ENCODE measurements at regions of chr2 and their contacts with region 1.

Region 1: GRCh38 chr2:62774555-62775366 is 69.2 kb downstream of the EHBP1 start:
- ATAC-seq: peak in 4 of 8 experiments; percentile 39 to 72 (median 48)
- H3K4me3 ChIP-seq: no peak overlapping the region
- H3K27ac ChIP-seq: no peak overlapping the region
- H3K4me1 ChIP-seq: no peaks in the 10 kb centered on the region

Region 2: DNA sequence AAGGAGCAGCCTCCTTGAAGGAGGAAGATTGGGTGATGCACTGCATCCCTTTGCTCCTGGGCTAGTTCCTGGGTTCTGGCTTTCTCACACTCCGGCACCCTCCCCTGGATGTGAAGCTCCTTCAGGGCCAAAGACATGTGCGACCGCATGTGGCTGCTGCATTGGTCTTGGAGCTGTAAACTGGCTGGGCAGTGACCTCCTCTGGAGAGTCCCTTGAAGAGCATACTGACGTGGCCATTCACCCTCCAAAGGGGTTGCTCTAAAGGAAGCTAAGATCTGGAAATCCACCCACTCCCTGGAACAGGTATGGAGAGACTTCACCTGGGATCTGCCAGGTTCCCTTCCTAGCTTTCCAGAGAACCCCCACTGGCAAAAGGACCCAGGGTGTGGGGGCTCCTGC is 330.9 kb before region 1 on chr2:
- in situ Hi-C with region 1: loop called in 1 of 9 experiments (anchors 10 kb)
- ATAC-seq: peak in 2 of 8 experiments; percentile 24 to 66
- H3K4me3 ChIP-seq: no peak overlapping the region
- H3K27ac ChIP-seq: no peak overlapping the region
- H3K4me1 ChIP-seq: no peaks in the 10 kb centered on the region

Region 3: GRCh38 chr2:62456721-62457539 is 317.8 kb before region 1 on chr2:
- in situ Hi-C with region 1: loop called in 8 of 9 experiments (anchors 10 to 25 kb)
- ATAC-seq: peak; percentile 91 to 99 (median 98)
- H3K4me3 ChIP-seq: peak overlapping the region; percentile 30 to 45 (median 39)
- H3K27ac ChIP-seq: no peak overlapping the region
- H3K4me1 ChIP-seq: peaks cover 0 to 4% of the 10 kb centered on the region in 2 donors

Region 4: DNA sequence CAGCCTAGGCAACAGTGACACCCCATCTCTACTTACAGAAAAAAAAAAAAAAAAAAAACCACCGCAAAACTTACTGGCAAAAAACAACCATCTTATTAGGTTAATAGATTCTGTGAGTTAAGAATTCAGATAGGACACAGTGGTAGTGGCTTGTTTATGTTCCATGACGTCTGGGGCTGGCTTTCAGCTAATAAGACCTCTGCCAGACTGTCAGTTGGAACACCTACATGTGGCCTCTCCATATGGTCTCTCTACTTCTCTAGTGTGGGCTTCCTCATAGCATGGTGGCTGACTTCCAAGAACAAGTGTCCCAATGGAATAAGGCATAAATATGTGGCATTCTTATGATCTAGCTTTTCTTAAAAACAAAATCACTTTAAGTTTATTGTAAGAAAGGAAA is 181.9 kb after region 1 on chr2:
- in situ Hi-C with region 1: no loop called
- ATAC-seq: no peak
- H3K4me3 ChIP-seq: no peak overlapping the region
- H3K27ac ChIP-seq: no peak overlapping the region
- H3K4me1 ChIP-seq: no peaks in the 10 kb centered on the region

Region 5: GRCh38 chr2:63023444-63023843 is 248.7 kb after region 1 on chr2:
- in situ Hi-C with region 1: loop called in 1 of 9 experiments (anchors 25 kb)
- ATAC-seq: peak in 3 of 8 experiments; percentile 52 to 86 (median 62)
- H3K4me3 ChIP-seq: no peak overlapping the region
- H3K27ac ChIP-seq: no peak overlapping the region
- H3K4me1 ChIP-seq: no peaks in the 10 kb centered on the region

Region 6: DNA sequence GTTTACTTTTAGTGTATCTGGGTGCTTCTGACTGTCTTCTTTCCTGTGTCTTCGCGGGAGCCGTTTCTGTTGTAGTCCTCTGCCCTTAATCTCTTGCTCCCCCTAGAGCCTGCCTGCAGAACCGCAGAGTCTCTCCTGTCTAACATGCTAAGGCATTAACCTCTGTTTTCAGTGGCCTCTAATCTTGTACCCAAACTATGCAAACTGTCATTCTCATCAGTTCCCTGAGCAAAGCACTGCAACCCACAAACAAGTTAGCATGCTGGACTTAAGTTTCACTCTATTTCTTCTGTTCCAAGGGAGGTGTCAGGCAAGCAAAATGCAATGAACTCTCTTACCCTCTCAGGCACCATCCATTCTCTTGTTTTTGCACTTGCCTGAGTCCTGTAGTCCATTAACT is 414.3 kb after region 1 on chr2:
- in situ Hi-C with region 1: loop called in 1 of 9 experiments (anchors 25 kb)
- ATAC-seq: peak in 3 of 8 experiments; percentile 75 to 94 (median 93)
- H3K4me3 ChIP-seq: no peak overlapping the region
- H3K27ac ChIP-seq: no peak overlapping the region
- H3K4me1 ChIP-seq: no peaks in the 10 kb centered on the region

Region 7: GRCh38 chr2:63488118-63488713 is 713.5 kb after region 1 on chr2:
- in situ Hi-C with region 1: loop called in 1 of 9 experiments (anchors 25 kb)
- ATAC-seq: peak in 3 of 8 experiments; percentile 34 to 39 (median 34)
- H3K4me3 ChIP-seq: no peak overlapping the region
- H3K27ac ChIP-seq: no peak overlapping the region
- H3K4me1 ChIP-seq: peaks cover 0 to 3% of the 10 kb centered on the region in 2 donors

Region 8: DNA sequence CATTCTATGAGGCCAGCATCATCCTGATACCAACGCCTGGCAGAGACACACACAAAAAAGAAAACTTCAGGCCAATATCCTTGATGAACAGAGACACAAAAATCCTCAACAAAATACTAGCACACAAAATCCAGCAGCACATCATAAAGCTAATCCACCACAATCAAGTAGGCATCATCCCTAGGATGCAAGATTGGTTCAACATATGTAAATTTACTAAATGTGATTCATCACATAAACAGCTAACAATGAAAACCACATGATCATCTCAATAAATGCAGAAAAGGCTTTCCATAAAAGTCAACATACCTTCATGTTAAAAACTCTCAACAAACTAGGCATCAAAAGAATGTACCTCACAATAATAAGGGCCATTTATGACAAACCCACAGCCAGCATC is 748.2 kb after region 1 on chr2:
- in situ Hi-C with region 1: loop called in 1 of 9 experiments (anchors 25 kb)
- ATAC-seq: peak in 2 of 8 experiments; percentile 71 to 73
- H3K4me3 ChIP-seq: no peak overlapping the region
- H3K27ac ChIP-seq: no peak overlapping the region
- H3K4me1 ChIP-seq: no peaks in the 10 kb centered on the region

Measured in motor neuron (in vitro differentiated cells).